PC-3 (cell line): ENCODE measurements at regions of chr3 and their contacts with region 1.

Region 1: GRCh38 chr3:150286390-150287147 is 121.5 kb upstream of the TSC22D2 start:
- DNase-seq: peak; percentile 80
- ATAC-seq: peak; percentile 98
- H3K4me3 ChIP-seq: peak overlapping the region; percentile 29
- H3K27ac ChIP-seq: no peak overlapping the region
- H3K4me1 ChIP-seq: peaks cover 7% of the 10 kb centered on the region
- H3K27me3 ChIP-seq: no peaks in the 10 kb centered on the region
- CTCF ChIP-seq: peak; percentile 87

Region 2: GRCh38 chr3:150238998-150239619 is 47.5 kb before region 1 on chr3:
- CTCF ChIA-PET with region 1: no interaction called
- POLR2A ChIA-PET with region 1: no interaction called
- intact Hi-C with region 1: loop called (anchors 2 kb)
- DNase-seq: peak; percentile 77
- ATAC-seq: peak; percentile 40
- H3K4me3 ChIP-seq: peak overlapping the region; percentile 61
- H3K27ac ChIP-seq: peak overlapping the region; percentile 95
- H3K4me1 ChIP-seq: peaks cover 46% of the 10 kb centered on the region
- H3K27me3 ChIP-seq: no peaks in the 10 kb centered on the region
- CTCF ChIP-seq: peak; percentile 96

Region 3: GRCh38 chr3:150348500-150348899 is 61.9 kb after region 1 on chr3:
- CTCF ChIA-PET with region 1: interaction called, 3 read pairs
- POLR2A ChIA-PET with region 1: no interaction called
- intact Hi-C with region 1: loop called (anchors 1 kb)
- DNase-seq: peak; percentile 96
- ATAC-seq: peak; percentile 78
- H3K4me3 ChIP-seq: peak overlapping the region; percentile 53
- H3K27ac ChIP-seq: peak overlapping the region; percentile 83
- H3K4me1 ChIP-seq: peaks cover 72% of the 10 kb centered on the region
- H3K27me3 ChIP-seq: no peaks in the 10 kb centered on the region
- CTCF ChIP-seq: no peak